ENCODE measurements at regions of chr11 and their contacts with region 1.

Region 1: DNA sequence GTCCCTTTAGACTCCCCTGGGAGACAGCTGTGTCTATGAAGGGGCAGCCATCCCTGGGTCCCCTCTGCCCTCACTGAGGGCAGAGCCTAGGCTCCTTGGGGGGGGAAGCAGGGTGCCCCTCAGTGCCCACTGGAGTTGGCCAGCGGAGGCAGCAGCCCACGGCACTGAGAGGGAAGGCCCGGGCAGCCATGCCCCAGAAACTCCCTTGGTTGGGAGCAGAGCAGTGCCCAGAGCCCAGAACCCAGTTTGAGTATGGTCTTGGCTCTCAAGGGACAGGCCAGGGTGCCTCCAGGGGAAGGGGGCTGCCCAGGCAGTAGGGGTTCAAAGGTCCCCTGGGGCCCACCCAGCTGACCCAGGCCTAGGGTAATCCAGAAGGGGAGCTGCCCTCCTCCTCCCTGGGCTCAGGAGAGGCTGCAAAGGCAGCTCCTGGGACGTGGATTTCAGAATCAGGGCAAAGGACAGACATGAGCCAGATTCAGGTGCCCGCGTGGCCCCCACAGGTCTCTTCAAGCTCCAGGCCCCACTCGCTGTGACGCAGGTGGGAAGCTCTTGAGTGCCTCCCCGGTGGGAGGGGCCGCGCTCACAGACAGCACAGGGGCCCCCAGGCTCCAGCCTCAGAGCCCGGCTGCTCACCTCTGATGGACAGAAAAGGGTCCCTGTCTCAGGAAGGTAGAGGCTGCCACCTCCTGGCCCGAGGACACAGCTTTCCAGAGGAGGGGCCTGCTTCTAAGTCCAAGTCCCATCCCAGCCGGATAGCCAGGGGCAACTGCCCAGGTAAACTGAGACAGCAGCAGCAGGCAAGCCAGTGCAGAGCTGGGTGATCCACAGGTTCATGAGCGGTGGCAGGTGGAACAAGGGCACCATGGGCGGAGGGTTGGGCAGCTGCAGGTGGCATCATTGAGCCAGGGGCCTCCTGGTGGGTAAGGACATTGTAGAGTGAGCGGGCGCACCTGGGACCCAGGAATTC is 2.6 kb downstream of the C11orf21 start:
- DNase-seq: peak; percentile 63
- ATAC-seq: peak; percentile 82
- H3K4me3 ChIP-seq: no peak overlapping the region
- H3K27ac ChIP-seq: no peak overlapping the region
- H3K4me1 ChIP-seq: peaks cover 31% of the 10 kb centered on the region
- H3K27me3 ChIP-seq: peaks cover 2 to 21% of the 10 kb centered on the region in 2 experiments; a peak in 2 of 5 replicates
- CTCF ChIP-seq: peak; percentile 96
- EP300 ChIP-seq: no peak
- POLR2A ChIP-seq: no peak
- RAD21 ChIP-seq: peak; percentile 96

Region 2: GRCh38 chr11:2166091-2166851 is 132.8 kb before region 1 on chr11:
- CTCF ChIA-PET with region 1: interaction called, 14 read pairs
- POLR2A ChIA-PET with region 1: no interaction called
- in situ Hi-C with region 1: no loop called
- intact Hi-C with region 1: loop called (anchors 1 kb)
- DNase-seq: no peak
- ATAC-seq: peak; percentile 44
- H3K4me3 ChIP-seq: no peak overlapping the region
- H3K27ac ChIP-seq: no peak overlapping the region
- H3K4me1 ChIP-seq: 0 out of 2 replicates have a peak, but pooled peaks cover 10% of the 10 kb centered on the region
- H3K27me3 ChIP-seq: peaks cover 39 to 86% of the 10 kb centered on the region in 2 experiments
- CTCF ChIP-seq: peak; percentile 81
- EP300 ChIP-seq: no peak
- POLR2A ChIP-seq: no peak
- RAD21 ChIP-seq: peak; percentile 60; the same call in 1 of the 2 replicates

Region 3: DNA sequence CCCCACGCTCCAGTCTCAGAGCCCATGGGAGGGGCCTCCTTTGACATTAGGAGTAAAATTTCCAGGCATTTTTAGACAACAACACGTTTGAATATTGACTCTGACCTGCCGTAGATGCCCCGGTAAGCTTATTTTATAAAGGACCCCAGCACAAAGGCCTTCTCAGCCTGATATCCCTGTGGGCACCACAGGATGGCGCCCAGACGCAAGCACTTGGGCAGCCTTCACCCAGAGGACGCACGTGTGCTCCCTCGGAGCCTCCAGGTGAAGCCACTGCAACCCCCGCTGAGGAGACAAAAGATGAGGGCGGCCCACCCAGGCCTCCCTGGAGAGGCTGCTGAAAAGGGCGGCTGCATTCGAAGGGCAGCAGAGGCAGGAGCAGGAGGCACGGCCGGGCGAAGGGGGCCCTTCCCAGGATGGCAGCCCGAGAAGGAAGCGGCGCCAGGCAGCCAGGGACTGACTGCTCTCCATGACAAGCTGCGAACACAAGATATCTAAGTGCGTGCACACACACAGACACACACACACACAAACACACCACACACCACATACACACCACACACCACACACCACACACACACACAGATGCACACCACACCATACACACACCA is 112.3 kb before region 1 on chr11:
- CTCF ChIA-PET with region 1: interaction called, 28 read pairs
- POLR2A ChIA-PET with region 1: no interaction called
- in situ Hi-C with region 1: no loop called
- intact Hi-C with region 1: loop called (anchors 1 kb)
- DNase-seq: peak; percentile 59
- ATAC-seq: peak; percentile 82
- H3K4me3 ChIP-seq: no peak overlapping the region
- H3K27ac ChIP-seq: no peak overlapping the region
- H3K4me1 ChIP-seq: no peaks in the 10 kb centered on the region
- H3K27me3 ChIP-seq: peaks cover 6 to 71% of the 10 kb centered on the region in 2 experiments
- CTCF ChIP-seq: peak; percentile 69
- EP300 ChIP-seq: no peak
- POLR2A ChIP-seq: no peak
- RAD21 ChIP-seq: peak; percentile 85